Activated CD4-positive, alpha-beta T cell treated with anti-CD3 and anti-CD28 coated beads, Interleukin-2, amount 10 ng/mL, durations not matched to agents 24 days and 14 days (primary cell): ENCODE measurements at regions of chr13 and their contacts with region 1.

Region 1: DNA sequence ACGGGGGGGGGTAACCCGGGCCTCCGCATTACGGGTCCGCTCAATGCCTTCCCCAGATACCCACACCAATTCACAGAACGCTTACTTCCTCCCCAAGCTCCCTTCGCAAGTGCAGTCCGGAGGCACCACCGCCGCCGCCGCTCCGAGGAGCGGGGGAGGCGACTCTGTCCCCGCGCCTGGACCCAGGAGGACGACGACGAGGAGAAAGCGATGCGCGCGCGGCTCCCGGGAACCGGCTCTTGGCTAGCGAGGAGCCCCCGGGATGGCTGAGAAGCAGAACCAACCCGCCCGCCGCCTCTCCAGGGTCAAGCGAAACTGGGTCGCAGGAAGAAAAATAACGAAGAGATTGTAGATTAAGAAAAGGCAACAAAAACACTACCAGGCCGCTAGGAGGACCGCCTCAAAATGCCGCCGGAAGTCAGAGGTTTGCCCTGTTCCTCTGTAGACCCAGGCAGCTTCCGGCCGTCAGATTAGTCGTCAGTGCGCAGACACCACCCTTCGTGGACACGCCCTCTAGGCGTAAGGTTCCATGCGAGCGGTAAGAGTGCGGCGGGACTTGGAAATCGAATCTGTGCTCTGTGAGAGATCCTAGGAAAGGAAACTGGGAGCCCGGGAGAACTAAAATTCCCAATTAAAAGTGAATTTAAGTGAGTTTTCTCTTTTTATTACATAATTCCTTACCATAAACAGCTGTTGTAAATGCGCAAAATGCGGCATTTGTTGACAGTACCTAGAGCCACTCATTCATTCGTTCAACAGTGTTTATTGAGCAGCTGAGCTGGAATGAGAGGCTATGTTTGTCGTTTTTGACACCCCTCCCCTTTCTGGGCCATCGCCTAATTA is at the start of gene ZC3H13:
- DNase-seq: peak; percentile 98
- H3K4me3 Mint-ChIP-seq: peak within 1 kb of the TSS; percentile 94
- H3K27ac Mint-ChIP-seq: peak within 1 kb of the TSS; percentile 98
- H3K4me1 Mint-ChIP-seq: peaks cover 32% of the 10 kb centered on the region
- H3K27me3 Mint-ChIP-seq: peaks cover 20% of the 10 kb centered on the region
- total RNA-seq, gene ZC3H13: 56.1 and 58.8 TPM in 2 replicates

Region 2: DNA sequence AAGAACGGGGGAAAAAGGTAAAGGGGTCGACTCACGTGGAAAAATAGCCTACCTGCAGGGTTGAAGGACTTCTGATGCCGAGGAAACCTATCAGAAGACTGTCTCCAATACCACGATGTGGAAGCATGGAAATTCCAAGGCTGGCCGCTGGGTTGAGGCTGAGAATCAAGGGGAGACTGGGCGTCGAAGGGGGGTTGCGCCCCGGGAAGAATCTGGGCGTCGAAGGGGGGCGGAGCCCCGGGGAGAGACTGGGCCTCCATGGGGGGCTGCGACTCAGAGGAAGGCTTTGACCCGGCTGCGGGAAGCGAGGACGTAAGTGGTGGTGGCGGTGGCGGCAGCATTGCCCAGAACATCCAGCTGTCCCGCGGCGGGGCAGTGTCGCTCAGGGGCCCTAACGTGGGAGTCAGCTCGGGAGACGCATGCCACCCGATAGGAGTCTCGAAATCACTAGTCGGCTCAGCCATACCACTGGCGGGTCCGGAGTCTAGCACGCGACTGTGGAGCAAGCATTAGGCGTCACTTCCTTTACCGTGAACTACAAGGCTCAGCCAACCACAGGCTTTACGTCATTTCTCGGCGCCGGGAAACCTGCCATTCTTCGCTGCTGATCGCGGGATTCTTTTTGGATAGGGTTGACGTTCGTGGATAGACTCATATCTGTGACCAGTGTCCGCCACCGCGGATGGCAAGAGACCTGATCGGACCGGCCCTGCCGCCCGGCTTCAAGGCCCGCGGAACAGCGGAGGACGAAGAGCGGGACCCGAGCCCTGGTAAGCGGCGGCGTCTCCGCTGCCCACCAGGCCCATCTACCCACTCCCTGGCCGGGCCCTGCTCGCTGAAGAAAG is 1063.3 kb before region 1 on chr13 and contains the starts of genes GPALPP1 and NUFIP1:
- intact Hi-C with region 1: loop called (anchors 5 kb)
- DNase-seq: peak; percentile 98
- H3K4me3 Mint-ChIP-seq: peak within 1 kb of the TSS; percentile 99
- H3K27ac Mint-ChIP-seq: peak within 1 kb of the TSS; percentile 98
- H3K4me1 Mint-ChIP-seq: peaks cover 46% of the 10 kb centered on the region
- H3K27me3 Mint-ChIP-seq: no peaks in the 10 kb centered on the region
- total RNA-seq, gene GPALPP1: 29.1 and 32.3 TPM in 2 replicates
- total RNA-seq, gene NUFIP1: 13.3 and 13.8 TPM in 2 replicates

Region 3: DNA sequence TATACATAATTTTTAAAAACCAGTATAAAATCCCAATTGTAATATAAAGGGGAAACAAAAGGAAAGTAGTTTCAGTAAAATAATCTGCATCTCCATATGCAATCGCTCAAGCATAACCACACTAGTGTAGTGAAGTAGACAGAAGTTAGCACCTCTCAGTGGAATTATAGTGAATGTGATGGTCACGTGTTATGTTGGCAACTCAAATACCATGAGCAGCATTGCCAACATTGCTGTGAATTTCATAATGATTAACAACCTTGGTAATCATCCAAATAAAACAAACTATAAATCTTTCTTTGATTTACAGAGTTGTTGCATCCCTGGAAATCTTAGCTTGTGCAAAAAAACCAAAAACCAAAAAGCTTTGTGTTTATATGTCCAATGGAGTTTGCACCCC is 123.7 kb before region 1 on chr13:
- intact Hi-C with region 1: no loop called
- DNase-seq: no peak
- H3K4me3 Mint-ChIP-seq: no peak overlapping the region
- H3K27ac Mint-ChIP-seq: no peak overlapping the region
- H3K4me1 Mint-ChIP-seq: no peaks in the 10 kb centered on the region
- H3K27me3 Mint-ChIP-seq: peaks cover 8% of the 10 kb centered on the region

Region 4: DNA sequence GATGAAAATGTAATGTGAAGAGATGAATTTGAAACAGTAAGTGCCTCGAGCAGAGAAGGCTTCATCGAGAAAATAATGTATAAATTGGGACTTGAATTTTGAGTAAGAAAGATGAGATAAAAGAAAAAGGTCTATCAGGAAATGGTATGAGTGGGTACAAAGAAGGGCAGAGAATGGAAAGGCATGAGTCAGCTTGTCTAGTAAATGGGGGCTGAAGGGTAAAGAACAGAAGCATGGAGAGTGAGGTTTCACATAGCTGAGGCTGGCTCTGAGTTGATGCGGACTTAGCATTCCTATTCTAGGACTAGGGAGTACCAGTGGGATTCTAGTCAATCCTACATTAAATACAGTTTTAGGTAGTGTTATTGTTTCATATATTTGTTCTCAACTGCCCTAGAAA is 85.8 kb before region 1 on chr13:
- intact Hi-C with region 1: no loop called
- DNase-seq: no peak
- H3K4me3 Mint-ChIP-seq: no peak overlapping the region
- H3K27ac Mint-ChIP-seq: peak overlapping the region; percentile 14
- H3K4me1 Mint-ChIP-seq: peaks cover 11% of the 10 kb centered on the region
- H3K27me3 Mint-ChIP-seq: no peaks in the 10 kb centered on the region

Region 5: GRCh38 chr13:46006688-46007452 is 45.7 kb before region 1 on chr13:
- intact Hi-C with region 1: loop called (anchors 5 kb)
- DNase-seq: no peak
- H3K4me3 Mint-ChIP-seq: no peak overlapping the region
- H3K27ac Mint-ChIP-seq: no peak overlapping the region
- H3K4me1 Mint-ChIP-seq: peaks cover 2% of the 10 kb centered on the region
- H3K27me3 Mint-ChIP-seq: no peaks in the 10 kb centered on the region

Region 6: GRCh38 chr13:46119883-46120614 is 67.5 kb after region 1 on chr13:
- intact Hi-C with region 1: loop called (anchors 5 kb)
- DNase-seq: peak; percentile 53
- H3K4me3 Mint-ChIP-seq: no peak overlapping the region
- H3K27ac Mint-ChIP-seq: no peak overlapping the region
- H3K4me1 Mint-ChIP-seq: peaks cover 3% of the 10 kb centered on the region
- H3K27me3 Mint-ChIP-seq: peaks cover 27% of the 10 kb centered on the region

Region 7: DNA sequence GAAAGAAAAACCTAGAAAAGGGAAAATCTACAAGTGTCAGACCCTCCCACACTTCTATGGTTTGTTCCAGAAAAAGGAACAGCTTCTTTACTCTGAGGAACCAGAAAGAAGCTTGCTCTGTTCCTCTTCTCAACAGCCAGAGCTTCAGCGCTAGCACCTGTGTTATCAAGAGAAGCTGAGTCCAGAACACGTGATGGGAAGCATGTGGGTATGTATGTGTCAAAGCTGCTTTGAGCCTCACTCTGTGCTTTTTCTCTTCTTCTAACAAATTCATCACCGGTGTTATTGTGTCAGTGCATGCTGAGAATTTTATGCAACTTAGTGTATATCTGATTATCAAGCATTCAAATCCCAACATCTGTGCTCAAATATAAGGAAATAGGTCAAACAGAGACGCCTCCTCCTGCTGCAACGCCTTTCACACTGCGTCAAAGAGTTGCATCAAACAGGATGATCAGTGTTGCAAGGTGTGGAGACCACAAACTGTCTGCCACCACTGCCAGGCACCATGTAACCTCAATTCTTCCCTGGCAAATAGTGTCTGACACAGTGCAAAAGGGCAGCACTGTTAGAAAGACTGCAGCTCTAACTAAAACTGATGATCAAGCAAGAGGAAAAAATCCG is 243.1 kb after region 1 on chr13:
- intact Hi-C with region 1: loop called (anchors 5 kb)
- DNase-seq: peak; percentile 83
- H3K4me3 Mint-ChIP-seq: peak overlapping the region; percentile 71
- H3K27ac Mint-ChIP-seq: peak overlapping the region; percentile 90
- H3K4me1 Mint-ChIP-seq: peaks cover 36% of the 10 kb centered on the region
- H3K27me3 Mint-ChIP-seq: no peaks in the 10 kb centered on the region

Region 8: DNA sequence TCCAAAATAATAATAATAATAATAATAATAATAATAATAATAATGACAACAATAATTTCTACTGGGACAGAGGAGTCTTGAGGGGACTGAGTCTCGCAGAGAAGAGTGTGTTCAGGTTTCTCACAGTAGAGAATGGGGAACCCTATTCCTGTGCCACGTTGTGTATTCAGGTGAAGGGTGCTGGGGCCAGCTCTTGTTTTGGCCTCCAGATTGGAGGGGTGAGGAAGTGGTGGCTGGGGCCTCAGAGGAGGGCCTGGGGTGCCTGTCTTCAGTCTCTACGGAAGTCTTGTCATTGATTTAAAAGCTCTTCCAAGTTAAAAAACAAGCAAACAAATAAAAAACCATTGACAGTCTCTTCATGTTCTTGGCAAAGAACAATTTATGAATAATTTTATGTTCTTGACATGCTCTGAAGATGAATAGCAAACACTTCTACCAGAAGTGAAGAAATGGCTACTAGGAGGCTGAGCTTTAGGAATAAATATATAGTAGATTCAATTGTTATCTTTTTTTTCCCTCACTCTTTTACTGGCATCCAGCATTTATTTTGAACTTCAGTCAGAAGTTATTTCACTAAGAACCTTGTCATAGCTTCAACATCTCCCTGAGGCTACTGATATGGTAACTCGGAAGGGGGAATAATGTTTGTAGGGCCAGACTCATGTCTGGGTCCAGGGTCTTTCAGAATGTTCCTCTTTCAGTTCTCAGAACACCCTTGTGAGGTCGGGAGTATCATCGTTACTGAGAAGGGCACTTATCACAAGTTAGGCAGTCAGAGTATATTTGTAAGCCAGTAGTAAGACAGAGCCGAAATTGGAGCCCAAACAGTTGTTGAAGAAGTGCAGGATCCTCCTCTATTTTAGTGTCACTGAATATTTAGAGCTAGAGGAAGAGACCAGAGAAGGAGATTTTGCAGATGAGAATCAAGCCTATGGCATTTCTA is 513.5 kb after region 1 on chr13:
- intact Hi-C with region 1: no loop called
- DNase-seq: no peak
- H3K4me3 Mint-ChIP-seq: no peak overlapping the region
- H3K27ac Mint-ChIP-seq: no peak overlapping the region
- H3K4me1 Mint-ChIP-seq: peaks cover 6% of the 10 kb centered on the region
- H3K27me3 Mint-ChIP-seq: no peaks in the 10 kb centered on the region

Region 9: GRCh38 chr13:46796515-46797474 is 744.3 kb after region 1 on chr13 and contains the start of gene ESD:
- intact Hi-C with region 1: loop called (anchors 2 kb)
- DNase-seq: peak; percentile 97
- H3K4me3 Mint-ChIP-seq: peak within 1 kb of the TSS; percentile 96
- H3K27ac Mint-ChIP-seq: peak within 1 kb of the TSS; percentile 98
- H3K4me1 Mint-ChIP-seq: peaks cover 27% of the 10 kb centered on the region
- H3K27me3 Mint-ChIP-seq: peaks cover 4% of the 10 kb centered on the region
- total RNA-seq, gene ESD: 127 and 128 TPM in 2 replicates

Region 10: DNA sequence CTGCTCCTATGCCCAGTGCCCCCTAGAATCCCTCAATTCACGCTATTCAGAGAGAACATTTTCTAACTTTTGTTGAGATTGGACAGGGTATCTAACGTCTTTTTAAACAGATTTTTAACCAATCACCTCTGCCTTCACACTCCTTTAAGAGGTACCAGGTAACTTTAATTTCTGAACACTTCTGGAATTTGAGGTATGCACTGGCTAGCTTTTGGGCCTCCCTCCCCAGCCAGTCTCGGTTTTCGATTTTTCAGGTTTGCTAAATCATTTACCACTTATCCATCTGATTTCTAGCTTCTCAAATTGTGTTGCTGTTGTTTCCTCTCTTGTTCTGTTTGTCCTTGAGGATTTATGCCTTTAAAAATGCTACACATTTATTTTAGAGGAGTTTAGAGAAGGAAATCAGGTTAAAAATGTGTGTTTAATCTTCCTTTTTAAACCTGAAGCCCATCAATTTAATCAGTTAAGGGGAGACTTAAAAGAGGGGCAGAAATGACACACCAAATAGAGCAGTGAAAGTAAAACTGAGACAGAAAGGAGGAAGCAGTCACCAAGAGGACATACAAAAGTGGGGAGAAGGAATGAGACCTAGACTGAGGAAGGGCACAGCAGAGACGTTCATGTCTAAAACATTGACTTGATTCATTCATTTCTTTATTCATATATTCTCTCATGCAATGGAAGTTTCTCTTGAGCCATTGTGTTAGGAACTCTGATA is 983.9 kb after region 1 on chr13:
- intact Hi-C with region 1: no loop called
- DNase-seq: no peak
- H3K4me3 Mint-ChIP-seq: no peak overlapping the region
- H3K27ac Mint-ChIP-seq: no peak overlapping the region
- H3K4me1 Mint-ChIP-seq: no peaks in the 10 kb centered on the region
- H3K27me3 Mint-ChIP-seq: peaks cover 6% of the 10 kb centered on the region